ENCODE measurements at regions of chr12 and their contacts with region 1.

Region 1: DNA sequence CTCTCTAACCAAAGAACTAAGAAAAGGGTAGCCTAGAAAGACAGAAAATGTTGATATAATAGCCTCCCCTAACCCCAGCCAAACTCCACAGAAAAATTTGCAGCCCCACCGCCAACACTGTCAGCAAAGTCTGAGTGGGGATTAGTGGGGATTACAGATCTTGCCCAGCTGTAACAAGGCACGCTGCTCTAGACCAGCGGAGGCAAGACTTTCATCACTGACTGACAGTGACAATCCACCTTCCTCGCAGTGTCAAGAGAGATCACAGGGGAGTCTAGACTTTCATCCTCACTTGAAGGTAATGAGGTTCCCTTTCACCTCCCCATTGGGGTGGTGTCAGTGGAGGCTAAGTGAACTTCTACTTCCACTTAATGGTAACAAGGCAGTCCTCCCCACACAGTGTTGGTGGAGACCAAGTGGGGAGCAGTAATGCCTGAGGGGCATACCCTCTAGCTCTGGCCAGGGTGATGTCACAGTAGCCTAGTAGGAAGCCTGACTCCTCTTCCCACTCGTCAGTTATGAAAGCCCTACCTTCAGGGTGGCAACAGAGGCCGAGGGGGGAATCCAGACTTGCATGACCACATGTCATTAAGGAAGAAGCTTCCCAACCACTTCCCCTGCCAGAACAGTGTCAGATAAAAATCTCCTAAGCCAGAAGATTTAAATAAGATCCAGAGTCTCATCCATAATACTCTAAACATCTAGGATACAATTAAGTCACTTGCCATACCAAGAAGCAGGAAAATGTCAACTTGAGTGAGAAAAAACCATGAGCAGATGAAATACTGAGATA is 91.7 kb upstream of the RASSF8 start:
- DNase-seq: no peak
- ATAC-seq: no peak
- H3K4me3 ChIP-seq: no peak overlapping the region
- H3K27ac ChIP-seq: no peak overlapping the region
- H3K4me1 ChIP-seq: no peaks in the 10 kb centered on the region
- H3K27me3 ChIP-seq: peaks cover 4% of the 10 kb centered on the region
- CTCF ChIP-seq: no peak

Region 2: GRCh38 chr12:25677232-25677937 is 189.4 kb before region 1 on chr12:
- CTCF ChIA-PET with region 1: no interaction called
- POLR2A ChIA-PET with region 1: interaction called, 13 read pairs
- in situ Hi-C with region 1: no loop called
- intact Hi-C with region 1: no loop called
- DNase-seq: no peak
- ATAC-seq: peak; percentile 65; the same call in 1 of the 2 replicates
- H3K4me3 ChIP-seq: no peak overlapping the region
- H3K27ac ChIP-seq: no peak overlapping the region
- H3K4me1 ChIP-seq: no peaks in the 10 kb centered on the region
- H3K27me3 ChIP-seq: peaks cover 10% of the 10 kb centered on the region
- CTCF ChIP-seq: peak; percentile 54

Region 3: DNA sequence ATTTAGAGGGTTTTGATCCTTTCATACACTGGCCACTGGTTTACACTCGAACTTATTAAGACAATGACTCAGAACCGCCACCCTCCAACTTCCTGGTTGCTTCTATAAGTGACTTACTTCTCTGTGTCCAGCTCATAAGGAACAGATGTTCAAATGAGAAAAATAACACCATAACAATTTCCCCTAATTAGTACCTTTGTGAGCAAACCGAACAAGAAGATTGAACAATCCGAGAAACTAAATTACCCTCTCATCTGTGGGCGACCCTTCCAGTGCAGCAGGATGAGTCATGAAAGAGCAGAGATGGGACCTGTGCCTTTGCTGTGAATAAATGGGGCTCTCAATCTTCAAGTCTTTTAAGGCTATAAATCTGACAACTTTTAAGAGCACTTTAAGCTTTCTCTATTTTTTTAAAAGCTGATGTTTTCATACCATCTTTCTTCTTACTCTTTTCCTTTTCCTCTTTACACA is 55.1 kb before region 1 on chr12:
- CTCF ChIA-PET with region 1: no interaction called
- POLR2A ChIA-PET with region 1: no interaction called
- in situ Hi-C with region 1: no loop called
- intact Hi-C with region 1: no loop called
- DNase-seq: peak; percentile 27
- ATAC-seq: no peak
- H3K4me3 ChIP-seq: no peak overlapping the region
- H3K27ac ChIP-seq: no peak overlapping the region
- H3K4me1 ChIP-seq: peaks cover 6% of the 10 kb centered on the region; the same call in 1 of the 2 replicates
- H3K27me3 ChIP-seq: no peaks in the 10 kb centered on the region
- CTCF ChIP-seq: no peak

Region 4: GRCh38 chr12:25877446-25877845 is 10.7 kb after region 1 on chr12:
- CTCF ChIA-PET with region 1: no interaction called
- POLR2A ChIA-PET with region 1: no interaction called
- in situ Hi-C with region 1: no loop called
- intact Hi-C with region 1: no loop called
- DNase-seq: no peak
- ATAC-seq: no peak
- H3K4me3 ChIP-seq: no peak overlapping the region
- H3K27ac ChIP-seq: no peak overlapping the region
- H3K4me1 ChIP-seq: no peaks in the 10 kb centered on the region
- H3K27me3 ChIP-seq: peaks cover 8% of the 10 kb centered on the region; the same call in 1 of the 2 replicates
- CTCF ChIP-seq: no peak

Region 5: DNA sequence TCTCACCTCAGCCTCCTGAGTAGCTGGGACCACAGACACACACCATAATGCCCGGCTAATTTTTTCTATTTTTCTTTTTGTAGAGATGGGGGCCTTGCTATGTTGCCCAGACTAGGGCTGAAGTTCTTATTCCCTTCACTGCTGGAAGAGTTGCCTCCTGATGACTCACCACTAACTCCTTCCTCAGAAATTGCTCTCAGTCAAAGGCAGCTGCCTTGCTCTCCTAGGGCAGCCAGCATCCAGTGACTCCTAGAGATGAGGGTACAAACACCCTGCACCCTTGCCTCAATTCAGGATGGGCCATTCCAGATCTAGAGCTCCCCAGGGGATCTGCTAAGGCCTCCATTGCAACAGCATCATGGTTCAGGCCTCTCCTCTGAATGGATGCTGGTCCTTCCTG is 37.7 kb after region 1 on chr12:
- CTCF ChIA-PET with region 1: no interaction called
- POLR2A ChIA-PET with region 1: no interaction called
- in situ Hi-C with region 1: no loop called
- intact Hi-C with region 1: no loop called
- DNase-seq: no peak
- ATAC-seq: 0 out of 2 replicates have a peak, but pooled peaks have one; percentile 30
- H3K4me3 ChIP-seq: no peak overlapping the region
- H3K27ac ChIP-seq: no peak overlapping the region
- H3K4me1 ChIP-seq: no peaks in the 10 kb centered on the region
- H3K27me3 ChIP-seq: peaks cover 4% of the 10 kb centered on the region; the same call in 1 of the 2 replicates
- CTCF ChIP-seq: no peak